MCF 10A (cell line): ENCODE measurements at regions of chr17 and their contacts with region 1.

Region 1: DNA sequence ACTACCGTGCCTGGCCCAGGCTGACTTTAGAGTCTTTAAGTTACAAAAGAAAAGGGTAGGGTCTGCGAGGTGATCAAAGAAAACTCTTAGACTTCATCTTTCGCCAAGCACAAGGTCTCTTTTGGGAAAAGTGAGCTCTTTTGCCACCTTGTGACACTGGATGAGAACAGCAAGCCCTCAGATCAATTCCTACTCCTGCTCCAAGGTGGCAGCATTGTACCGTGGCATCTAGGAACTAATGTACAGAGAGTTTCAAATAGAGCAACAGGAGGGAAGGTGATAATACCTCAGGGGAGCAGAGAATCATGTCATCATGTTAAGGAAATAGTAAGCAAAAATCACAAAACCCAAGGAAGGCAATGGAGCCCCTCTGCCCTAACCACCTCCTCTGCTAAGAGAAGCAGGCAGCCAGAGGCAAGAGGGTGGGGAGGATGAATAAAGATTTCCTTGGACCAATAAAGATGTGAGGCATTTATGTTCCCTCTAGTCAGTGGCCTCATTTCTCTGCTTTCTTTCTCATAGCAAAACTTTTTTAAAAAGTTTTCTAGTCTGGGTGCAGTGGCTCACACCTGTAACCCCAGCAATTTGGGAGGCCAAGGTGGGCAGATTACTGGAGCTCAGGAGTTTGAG is 2.1 kb upstream of the C17orf78 start:
- DNase-seq: peak; percentile 93
- H3K4me3 Mint-ChIP-seq: no peak overlapping the region
- H3K27ac Mint-ChIP-seq: no peak overlapping the region
- H3K4me1 Mint-ChIP-seq: peaks cover 8% of the 10 kb centered on the region
- H3K27me3 Mint-ChIP-seq: no peaks in the 10 kb centered on the region
- CTCF ChIP-seq: peak; percentile 99

Region 2: DNA sequence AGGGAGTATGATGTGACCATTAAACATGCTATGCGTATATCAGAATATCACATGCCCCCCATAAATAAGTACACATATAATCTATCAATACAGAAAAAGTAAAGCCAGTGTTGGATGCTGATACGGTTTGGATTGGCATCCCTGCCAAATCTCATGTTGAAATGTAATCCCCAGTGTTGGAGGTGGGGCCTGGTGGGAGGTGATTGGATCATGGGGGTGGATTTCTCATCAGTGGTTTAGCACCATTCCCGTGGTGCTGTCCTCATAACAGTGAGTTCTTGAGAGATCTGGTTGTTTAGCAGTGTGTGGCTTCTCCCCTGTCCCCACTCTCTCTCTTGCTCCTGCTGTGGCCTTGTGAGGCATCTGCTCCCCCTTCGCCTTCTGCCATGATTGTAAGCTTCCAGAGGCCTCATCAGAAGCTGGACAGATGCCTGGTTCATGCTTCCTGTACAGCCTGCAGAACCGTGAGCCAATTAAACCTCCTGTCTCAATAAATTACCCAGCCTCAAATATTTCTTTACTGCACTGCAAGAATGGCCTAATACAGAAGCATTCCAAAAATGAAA is 336.0 kb before region 1 on chr17:
- CTCF ChIA-PET with region 1: no interaction called
- POLR2A ChIA-PET with region 1: no interaction called
- intact Hi-C with region 1: no loop called
- DNase-seq: no peak
- H3K4me3 Mint-ChIP-seq: no peak overlapping the region
- H3K27ac Mint-ChIP-seq: no peak overlapping the region
- H3K4me1 Mint-ChIP-seq: no peaks in the 10 kb centered on the region
- H3K27me3 Mint-ChIP-seq: no peaks in the 10 kb centered on the region
- CTCF ChIP-seq: no peak

Region 3: DNA sequence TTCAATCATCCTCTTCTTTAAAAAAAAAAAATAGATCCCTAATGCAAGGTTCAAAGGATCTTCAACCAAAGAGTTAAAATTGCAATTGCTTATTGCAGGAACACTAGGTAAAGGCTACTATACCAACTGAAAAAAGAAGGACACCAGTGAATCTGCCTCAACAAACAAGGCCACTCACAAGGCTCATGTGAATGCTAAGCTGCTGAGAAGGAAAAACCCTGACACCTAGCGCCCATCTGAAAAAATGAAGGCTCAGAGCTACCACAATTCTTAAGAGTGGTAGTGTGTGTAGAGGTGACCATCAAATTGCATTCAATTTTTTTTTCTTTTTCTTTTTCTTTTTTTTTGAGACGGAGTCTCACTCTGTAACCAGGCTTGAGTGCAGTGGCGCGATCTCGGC is 199.4 kb before region 1 on chr17:
- CTCF ChIA-PET with region 1: no interaction called
- POLR2A ChIA-PET with region 1: no interaction called
- intact Hi-C with region 1: no loop called
- DNase-seq: no peak
- H3K4me3 Mint-ChIP-seq: no peak overlapping the region
- H3K27ac Mint-ChIP-seq: no peak overlapping the region
- H3K4me1 Mint-ChIP-seq: peaks cover 19% of the 10 kb centered on the region
- H3K27me3 Mint-ChIP-seq: no peaks in the 10 kb centered on the region
- CTCF ChIP-seq: peak; percentile 16

Region 4: DNA sequence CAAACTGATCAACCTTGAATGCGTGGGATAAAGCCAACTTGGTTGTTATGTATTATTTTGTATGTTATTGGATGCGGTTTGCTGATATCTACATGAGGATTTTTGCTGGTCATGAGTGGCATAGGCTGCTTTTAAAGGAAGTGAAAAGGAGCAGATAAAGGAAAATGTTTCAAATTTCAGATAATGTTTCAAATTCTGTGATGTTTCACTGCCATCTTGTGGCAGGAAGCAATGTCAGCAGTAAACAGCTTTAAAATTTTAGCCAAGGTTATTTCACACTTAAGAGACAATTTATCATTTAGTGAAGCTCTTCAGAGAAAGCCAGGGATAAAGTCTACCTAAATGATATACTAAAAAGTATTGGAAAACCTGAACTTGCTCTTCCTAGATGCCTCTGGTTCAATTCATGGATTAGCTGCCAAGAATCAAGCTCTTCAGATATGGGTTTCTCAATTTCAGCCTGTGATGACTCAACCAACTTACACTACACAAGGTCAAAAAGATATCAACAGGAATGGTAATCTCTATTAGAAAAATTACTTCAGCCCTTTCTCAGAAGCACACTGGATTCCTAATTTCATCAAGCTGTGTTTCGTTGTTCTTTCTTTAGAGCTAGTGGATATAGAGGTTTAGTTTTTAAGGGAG is 133.8 kb before region 1 on chr17:
- CTCF ChIA-PET with region 1: interaction called, 30 read pairs
- POLR2A ChIA-PET with region 1: interaction called, 3 read pairs
- intact Hi-C with region 1: loop called (anchors 1 kb)
- DNase-seq: peak; percentile 46
- H3K4me3 Mint-ChIP-seq: no peak overlapping the region
- H3K27ac Mint-ChIP-seq: no peak overlapping the region
- H3K4me1 Mint-ChIP-seq: peaks cover 10% of the 10 kb centered on the region
- H3K27me3 Mint-ChIP-seq: no peaks in the 10 kb centered on the region
- CTCF ChIP-seq: peak; percentile 55

Region 5: DNA sequence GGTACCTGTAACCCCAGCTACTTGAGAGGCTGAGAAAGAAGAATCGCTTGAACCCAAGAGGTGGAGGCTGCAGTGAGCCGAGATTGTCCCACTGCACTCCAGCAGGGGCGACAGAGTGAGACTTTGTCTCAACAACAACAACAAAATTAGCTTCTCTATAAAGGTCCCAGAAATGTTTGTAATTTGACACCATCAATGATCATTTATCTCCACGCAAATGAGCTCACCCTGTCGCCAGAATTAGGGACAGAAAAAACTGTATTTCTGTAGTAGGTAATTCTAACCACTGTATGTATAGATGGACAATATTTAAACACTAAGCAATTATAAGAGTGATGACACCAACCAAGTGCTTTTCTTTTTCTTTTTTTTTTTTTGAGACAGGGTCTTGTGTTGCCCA is 12.8 kb after region 1 on chr17:
- CTCF ChIA-PET with region 1: interaction called, 24 read pairs
- POLR2A ChIA-PET with region 1: interaction called, 3 read pairs
- intact Hi-C with region 1: no loop called
- DNase-seq: no peak
- H3K4me3 Mint-ChIP-seq: no peak overlapping the region
- H3K27ac Mint-ChIP-seq: no peak overlapping the region
- H3K4me1 Mint-ChIP-seq: peaks cover 17% of the 10 kb centered on the region
- H3K27me3 Mint-ChIP-seq: no peaks in the 10 kb centered on the region
- CTCF ChIP-seq: no peak

Region 6: DNA sequence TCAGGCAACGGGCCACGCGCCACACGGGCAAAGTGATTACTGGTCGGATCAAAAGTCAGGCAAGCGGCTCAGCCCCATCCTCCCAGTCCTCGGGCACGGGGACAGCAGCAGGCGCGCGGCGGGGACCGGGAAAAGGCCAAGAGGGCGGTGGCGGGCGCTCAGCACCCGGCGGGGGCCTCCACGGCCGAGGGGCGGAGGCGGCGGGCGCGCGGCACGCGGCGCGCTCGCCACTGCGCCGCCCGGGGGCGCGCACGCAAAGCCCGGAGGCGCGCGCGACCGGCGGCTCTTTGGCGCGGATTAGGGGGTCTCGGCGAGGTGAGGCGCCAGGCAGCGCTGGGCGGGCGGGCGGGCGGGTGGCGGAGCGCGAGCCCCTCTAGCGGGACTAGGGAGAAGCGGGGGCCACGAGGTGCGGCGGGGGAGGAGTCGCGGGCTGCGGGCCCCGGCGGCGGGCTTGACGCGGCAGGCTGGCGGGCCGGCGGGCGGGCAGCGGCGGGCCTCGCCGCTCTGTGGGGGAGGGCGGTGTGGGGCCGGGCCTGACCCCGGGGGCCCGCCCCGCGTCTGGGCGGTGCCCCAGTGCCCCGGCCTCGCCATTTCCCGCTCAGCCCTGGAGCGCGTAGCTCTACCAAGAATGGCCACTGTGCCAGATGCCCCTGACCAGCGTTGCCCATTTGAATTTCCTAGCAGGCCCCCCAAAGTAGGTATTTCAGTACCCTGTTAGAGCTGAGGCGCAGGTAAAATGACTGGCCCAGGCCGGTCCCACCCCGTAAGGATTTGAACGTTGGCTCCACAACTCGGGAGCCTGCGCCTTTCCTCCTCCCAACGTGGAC is 33.2 kb after region 1 on chr17 and contains the starts of genes ACACA and TADA2A:
- CTCF ChIA-PET with region 1: interaction called, 10 read pairs
- POLR2A ChIA-PET with region 1: interaction called, 6 read pairs
- intact Hi-C with region 1: no loop called
- DNase-seq: peak; percentile 81
- H3K4me3 Mint-ChIP-seq: peak within 1 kb of the TSS; percentile 95
- H3K27ac Mint-ChIP-seq: peak within 1 kb of the TSS; percentile 52
- H3K4me1 Mint-ChIP-seq: peaks cover 10% of the 10 kb centered on the region
- H3K27me3 Mint-ChIP-seq: no peaks in the 10 kb centered on the region
- CTCF ChIP-seq: no peak
- total RNA-seq, gene ACACA: 88.6 and 100 TPM in 2 replicates
- total RNA-seq, gene TADA2A: 25.3 and 31.3 TPM in 2 replicates

Region 7: DNA sequence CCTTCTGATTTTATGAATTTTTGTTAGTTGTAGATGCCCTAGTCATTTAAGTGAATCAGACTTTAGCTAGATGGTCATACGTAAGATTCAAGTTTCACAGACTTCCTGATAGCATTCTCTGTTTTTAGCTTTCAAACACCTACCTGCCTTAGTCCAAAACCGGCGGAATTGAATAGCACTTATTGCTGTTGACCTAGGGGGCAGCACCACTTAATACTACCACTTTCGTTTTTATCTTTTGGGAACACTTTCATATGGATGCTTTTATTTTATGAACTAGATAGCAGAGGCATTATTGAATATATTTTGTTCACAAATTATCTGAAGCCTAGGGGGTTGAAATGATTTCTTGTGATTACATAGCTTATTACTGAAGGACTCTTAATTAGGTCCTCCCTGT is 64.5 kb after region 1 on chr17:
- CTCF ChIA-PET with region 1: no interaction called
- POLR2A ChIA-PET with region 1: no interaction called
- intact Hi-C with region 1: no loop called
- DNase-seq: no peak
- H3K4me3 Mint-ChIP-seq: no peak overlapping the region
- H3K27ac Mint-ChIP-seq: peak overlapping the region; percentile 49
- H3K4me1 Mint-ChIP-seq: no peaks in the 10 kb centered on the region
- H3K27me3 Mint-ChIP-seq: no peaks in the 10 kb centered on the region
- CTCF ChIP-seq: no peak

Region 8: DNA sequence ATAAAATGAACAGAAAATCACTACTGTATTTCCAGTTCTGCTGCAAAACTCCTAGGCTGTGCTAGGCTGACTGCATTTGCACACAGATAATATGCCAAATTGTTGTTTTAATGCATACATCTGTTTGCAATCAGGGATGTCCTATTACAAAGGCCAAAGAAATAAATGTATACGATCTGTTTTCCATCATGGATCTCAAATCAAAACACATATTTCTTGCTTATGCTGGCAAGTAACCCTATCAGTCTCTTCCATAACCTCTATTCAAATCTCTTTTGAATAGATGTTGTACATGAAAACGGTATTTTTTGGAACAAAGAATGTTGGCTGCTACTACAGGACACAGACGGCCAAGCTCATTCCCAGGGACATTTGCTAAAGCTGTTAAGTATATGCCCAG is 172.7 kb after region 1 on chr17:
- CTCF ChIA-PET with region 1: no interaction called
- POLR2A ChIA-PET with region 1: no interaction called
- intact Hi-C with region 1: no loop called
- DNase-seq: no peak
- H3K4me3 Mint-ChIP-seq: no peak overlapping the region
- H3K27ac Mint-ChIP-seq: no peak overlapping the region
- H3K4me1 Mint-ChIP-seq: peaks cover 8% of the 10 kb centered on the region
- H3K27me3 Mint-ChIP-seq: no peaks in the 10 kb centered on the region
- CTCF ChIP-seq: no peak

Region 9: DNA sequence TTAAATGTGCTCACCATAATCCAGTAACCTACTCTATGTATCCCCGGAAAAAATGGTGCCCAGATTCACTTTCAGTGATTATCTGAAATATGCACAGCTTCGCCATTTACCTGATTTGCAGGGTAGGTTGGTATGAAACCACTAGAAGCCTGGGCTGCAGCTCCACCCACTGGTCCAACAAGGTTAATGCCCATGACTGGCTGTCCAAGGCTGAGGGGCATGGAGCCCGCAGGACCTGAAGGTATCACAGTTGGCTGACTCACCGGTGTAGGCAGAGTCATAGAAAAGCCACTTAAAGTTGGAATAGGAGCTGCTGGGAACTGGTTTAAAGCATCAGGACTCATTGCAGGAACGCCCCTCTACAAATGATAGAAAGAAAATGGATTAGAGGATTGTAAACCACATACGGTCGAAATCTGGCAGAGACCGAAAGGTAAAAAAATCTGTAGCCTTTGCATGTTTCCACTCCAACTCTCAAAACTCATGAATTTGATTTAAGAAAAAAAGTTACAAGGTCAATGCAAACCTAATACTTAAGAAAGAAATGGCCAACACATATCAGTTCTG is 197.0 kb after region 1 on chr17:
- CTCF ChIA-PET with region 1: interaction called, 13 read pairs
- POLR2A ChIA-PET with region 1: interaction called, 3 read pairs
- intact Hi-C with region 1: loop called (anchors 1 kb)
- DNase-seq: peak; percentile 90
- H3K4me3 Mint-ChIP-seq: no peak overlapping the region
- H3K27ac Mint-ChIP-seq: peak overlapping the region; percentile 42
- H3K4me1 Mint-ChIP-seq: peaks cover 10% of the 10 kb centered on the region
- H3K27me3 Mint-ChIP-seq: no peaks in the 10 kb centered on the region
- CTCF ChIP-seq: peak; percentile 75